GM10248 (cell line): ENCODE measurements at regions of chr3 and their contacts with region 1.

Region 1: GRCh38 chr3:151356794-151357462 is 27.6 kb upstream of the P2RY13 start:
- DNase-seq: no peak
- CTCF ChIP-seq: no peak

Region 2: DNA sequence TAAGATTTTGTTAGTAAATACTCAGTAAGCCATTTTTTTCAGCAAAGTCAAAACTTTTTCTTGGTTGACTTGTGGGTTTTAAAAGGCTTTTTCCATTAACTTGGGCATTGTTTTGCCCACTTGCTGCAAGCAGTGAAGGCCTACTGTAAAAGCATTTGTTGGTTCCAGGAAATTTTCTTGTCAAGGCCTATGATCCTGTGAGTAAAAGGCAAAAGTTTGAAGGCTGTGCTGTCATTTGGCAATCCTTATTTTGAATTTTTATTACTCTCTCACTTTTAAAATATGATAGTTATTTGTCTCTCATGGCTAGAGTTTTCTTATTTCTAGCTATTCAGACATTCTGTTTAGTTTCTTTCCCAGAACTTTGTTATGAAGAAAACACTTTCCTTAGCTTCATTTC is 14.6 kb after region 1 on chr3:
- CTCF ChIA-PET with region 1: interaction called, 10 read pairs
- POLR2A ChIA-PET with region 1: no interaction called
- DNase-seq: no peak
- CTCF ChIP-seq: no peak

Region 3: DNA sequence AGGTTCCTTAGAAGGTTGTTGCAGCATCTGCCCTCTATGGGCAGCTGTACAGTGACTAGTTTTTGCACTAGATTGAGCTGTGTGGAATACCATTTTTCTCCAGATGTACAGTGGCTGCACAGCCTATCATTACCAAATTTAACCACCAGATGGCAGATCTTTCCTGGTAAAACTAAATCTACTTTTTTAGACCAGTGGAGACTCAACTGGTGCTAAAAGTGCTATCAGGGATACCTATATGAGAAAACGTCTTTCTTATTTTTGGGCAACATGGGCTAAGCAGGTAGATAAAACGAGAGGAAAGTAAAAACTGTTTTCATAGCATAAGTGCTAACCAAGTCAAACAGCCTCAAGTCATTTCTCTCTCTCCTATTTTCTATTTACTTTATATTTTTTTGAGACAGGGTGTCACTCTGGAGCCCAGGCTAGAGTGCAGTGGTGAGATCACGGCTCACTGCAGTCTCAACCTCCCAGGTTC is 82.8 kb after region 1 on chr3:
- CTCF ChIA-PET with region 1: no interaction called
- POLR2A ChIA-PET with region 1: no interaction called
- DNase-seq: peak; percentile 41
- CTCF ChIP-seq: peak; percentile 67